Endothelial cell of umbilical vein (primary cell): ENCODE measurements at regions of chr6 and their contacts with region 1.

Region 1: DNA sequence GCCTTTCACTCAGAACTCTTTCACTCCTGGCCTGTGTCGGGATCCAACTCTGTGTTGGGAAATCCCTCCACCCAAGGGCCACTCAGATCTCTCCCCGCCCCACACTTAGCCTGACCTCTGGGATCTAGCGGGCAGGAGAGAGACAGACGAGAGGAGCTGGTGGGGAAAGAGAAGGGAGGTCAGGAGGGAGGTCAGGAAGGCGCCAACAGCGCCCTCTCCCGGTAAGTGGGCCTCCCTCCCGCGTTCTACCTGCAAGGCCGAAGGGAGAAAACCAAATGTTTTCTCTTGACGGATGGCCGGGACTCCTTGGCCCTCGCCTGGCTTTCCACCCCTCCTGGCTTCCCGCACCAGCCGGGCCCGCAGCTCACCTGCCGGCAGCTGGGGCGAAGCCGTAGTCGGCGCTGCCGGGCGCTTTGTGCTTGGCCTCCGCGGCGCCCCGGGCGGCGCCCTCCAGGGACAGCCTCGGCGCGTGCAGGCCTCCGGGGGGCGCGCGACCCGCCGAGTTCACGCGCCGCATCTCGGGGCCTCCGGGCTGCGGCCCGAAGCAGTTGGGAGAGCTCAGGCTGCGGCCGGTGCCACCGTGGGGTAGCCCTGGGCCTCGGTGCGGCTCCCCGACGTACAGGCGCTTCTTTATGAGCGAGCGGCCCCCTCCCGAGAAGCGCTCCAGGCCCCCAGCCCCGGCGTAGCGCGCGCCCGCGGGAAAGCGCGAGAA is 38.2 kb downstream of the C6orf132 start:
- DNase-seq: peak; percentile 64
- H3K4me3 ChIP-seq: peak overlapping the region in 2 of 3 experiments; percentile 11 to 25
- H3K27ac ChIP-seq: no peak overlapping the region
- H3K4me1 ChIP-seq: peaks cover 5% of the 10 kb centered on the region
- H3K27me3 ChIP-seq: no peaks in the 10 kb centered on the region
- CTCF ChIP-seq: peak; percentile 86 to 87
- POLR2A ChIP-seq: no peak

Region 2: GRCh38 chr6:41451039-41451438 is 653.2 kb before region 1 on chr6:
- CTCF ChIA-PET with region 1: no interaction called
- POLR2A ChIA-PET with region 1: no interaction called
- dilution Hi-C with region 1: no loop called
- intact Hi-C with region 1: no loop called
- DNase-seq: no peak
- H3K4me3 ChIP-seq: no peak overlapping the region
- H3K27ac ChIP-seq: no peak overlapping the region
- H3K4me1 ChIP-seq: no peaks in the 10 kb centered on the region
- H3K27me3 ChIP-seq: peaks cover 2 to 6% of the 10 kb centered on the region in 2 experiments
- CTCF ChIP-seq: no peak
- POLR2A ChIP-seq: no peak

Region 3: DNA sequence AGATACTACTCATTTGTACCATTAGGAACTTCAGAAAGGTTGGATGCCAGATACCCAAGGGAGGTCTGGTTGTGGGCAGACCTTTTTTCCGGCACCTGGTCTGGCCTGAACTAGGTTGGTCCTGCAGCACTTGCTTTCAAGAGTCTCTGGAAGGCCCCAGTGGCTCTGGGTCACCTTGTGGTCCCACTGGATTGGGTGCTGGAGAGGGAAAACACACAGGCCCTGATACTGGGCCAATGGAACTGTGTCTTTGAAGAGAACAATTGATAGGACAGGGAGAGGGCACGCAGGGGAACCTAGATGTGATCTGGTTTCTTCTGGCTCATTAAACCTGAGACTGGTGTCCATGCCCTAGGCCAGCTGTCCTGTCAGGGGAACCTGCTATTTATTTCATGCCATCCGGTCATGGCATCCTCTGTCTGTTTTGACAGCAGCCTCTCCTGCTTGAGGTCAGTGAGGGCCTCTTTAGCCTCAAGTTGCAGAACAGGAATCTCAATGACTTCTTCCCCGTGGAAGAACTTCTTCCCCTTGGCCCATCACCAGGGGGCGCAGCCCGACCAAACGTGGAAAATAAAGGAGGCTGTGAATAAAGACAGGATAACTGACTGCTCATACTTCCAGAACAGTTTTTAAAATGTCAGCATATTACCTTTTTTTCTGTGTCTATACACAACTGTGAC is 29.0 kb before region 1 on chr6:
- CTCF ChIA-PET with region 1: interaction called, 12 read pairs
- POLR2A ChIA-PET with region 1: no interaction called
- dilution Hi-C with region 1: no loop called
- intact Hi-C with region 1: loop called (anchors 1 kb)
- DNase-seq: peak; percentile 72
- H3K4me3 ChIP-seq: no peak overlapping the region
- H3K27ac ChIP-seq: no peak overlapping the region
- H3K4me1 ChIP-seq: no peaks in the 10 kb centered on the region
- H3K27me3 ChIP-seq: no peaks in the 10 kb centered on the region
- CTCF ChIP-seq: peak; percentile 77 to 84
- POLR2A ChIP-seq: peak; percentile 10

Region 4: DNA sequence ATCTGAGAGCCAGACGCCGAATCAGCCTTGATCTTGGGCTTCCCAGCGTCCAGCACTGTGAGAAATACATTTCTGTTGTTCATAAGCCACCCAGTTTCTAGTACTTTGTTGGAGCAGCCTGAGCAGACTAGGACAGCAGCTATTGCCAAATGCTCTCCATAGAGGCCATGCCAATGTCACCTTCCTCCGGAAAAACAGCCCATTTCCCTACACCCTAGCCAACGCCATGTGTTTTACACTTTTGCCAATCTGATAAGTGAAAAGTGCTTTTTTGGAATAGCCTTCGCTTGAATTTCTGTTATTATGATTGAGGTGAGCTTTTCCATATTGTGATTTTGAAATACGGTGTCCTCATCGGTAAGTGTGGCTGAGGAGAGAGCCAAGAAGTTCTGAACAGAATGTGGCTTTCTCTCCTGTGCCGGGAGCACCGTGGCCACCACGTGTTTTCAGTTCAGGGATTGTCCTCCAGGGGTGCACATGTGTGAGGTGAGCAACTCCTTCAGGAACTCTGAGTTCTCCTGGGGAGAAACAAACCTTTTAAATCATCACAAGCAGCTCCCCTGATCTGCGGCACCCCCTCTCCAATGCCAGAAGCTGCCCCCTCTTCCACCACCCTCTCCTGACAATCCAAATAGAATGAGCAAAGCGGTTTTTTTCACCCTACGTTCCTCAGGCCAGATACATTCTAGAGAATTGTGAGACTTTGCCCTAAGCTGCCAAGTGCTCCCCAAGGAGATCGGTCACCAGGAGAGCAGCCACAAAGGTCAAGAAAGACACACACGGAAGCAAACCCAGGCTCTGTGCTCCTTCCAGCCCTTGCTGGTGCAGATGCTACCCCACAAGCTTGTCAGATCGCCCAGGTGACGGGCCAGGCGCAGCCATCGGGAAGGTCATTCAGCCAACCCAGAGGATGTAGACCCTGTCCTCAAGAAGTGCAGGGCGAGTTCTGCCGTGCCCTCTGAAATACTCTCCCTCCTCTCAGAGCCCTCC is 17.9 kb before region 1 on chr6:
- CTCF ChIA-PET with region 1: interaction called, 35 read pairs
- POLR2A ChIA-PET with region 1: no interaction called
- dilution Hi-C with region 1: no loop called
- intact Hi-C with region 1: no loop called
- DNase-seq: peak; percentile 73
- H3K4me3 ChIP-seq: no peak overlapping the region
- H3K27ac ChIP-seq: no peak overlapping the region
- H3K4me1 ChIP-seq: peaks cover 5% of the 10 kb centered on the region
- H3K27me3 ChIP-seq: no peaks in the 10 kb centered on the region
- CTCF ChIP-seq: peak; percentile 31 to 51
- POLR2A ChIP-seq: no peak

Region 5: DNA sequence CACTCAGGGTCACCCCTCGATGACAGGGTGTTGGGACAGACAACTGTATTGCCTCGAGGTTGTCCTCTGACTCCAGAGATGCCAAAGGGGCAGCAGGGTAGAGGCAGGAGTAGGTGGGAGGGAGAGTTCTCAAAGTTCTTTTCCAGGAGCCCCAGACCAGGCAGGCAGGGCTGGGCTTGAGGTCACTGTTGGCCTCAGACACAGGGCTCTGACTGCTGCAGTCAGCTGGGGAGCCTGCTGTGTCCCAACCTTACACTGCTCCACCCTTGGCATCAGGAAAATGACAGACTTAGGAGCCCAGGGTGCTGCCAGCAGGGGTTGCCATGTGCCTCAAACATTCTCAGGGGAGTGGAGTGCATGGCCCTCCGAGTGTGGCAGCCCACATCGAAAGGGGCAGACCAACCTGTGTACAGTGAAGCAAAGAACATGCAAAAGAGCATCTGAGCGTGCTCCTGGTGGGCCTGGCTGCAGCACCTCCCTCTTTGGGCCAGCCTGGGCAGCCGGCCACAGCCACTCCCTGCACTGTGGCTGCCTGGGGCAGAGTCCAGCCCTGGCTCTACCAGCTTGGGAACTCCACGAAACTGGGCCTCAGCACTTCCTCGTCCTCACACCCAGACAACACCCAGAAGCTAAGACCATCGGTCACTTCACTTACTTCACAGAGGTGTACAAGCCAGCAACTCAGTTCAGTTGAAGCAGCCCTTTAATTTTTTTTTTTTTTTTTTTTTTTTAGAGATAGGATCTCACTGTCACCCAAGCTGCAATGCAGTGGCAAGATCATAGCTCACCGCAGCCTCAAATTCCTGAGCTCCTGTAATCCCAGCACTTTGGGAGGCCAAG is 14.1 kb after region 1 on chr6:
- CTCF ChIA-PET with region 1: interaction called, 13 read pairs
- POLR2A ChIA-PET with region 1: no interaction called
- dilution Hi-C with region 1: no loop called
- intact Hi-C with region 1: no loop called
- DNase-seq: no peak
- H3K4me3 ChIP-seq: no peak overlapping the region
- H3K27ac ChIP-seq: no peak overlapping the region
- H3K4me1 ChIP-seq: no peaks in the 10 kb centered on the region
- H3K27me3 ChIP-seq: peaks cover 0 to 2% of the 10 kb centered on the region in 2 experiments
- CTCF ChIP-seq: no peak
- POLR2A ChIP-seq: no peak

Region 6: DNA sequence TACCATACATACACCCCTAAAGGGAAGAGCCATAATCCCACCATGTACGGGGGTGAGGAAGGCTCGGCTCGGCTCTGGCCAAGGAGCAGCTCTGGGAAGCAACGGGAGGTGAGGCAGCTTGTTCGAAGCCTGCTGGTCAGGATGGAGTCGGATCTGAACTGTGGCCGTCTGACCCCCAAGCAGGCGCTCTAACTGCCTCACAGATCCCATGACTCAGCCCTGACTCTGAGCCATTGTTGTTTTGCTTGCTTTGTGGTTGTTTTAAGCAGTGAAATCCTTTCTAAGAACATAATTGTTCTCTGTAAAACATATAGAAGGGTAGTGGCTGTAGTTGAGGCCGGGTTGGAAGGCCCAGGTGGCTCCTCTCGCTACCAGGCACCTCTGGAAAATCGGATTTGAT is 27.3 kb after region 1 on chr6:
- CTCF ChIA-PET with region 1: interaction called, 31 read pairs
- POLR2A ChIA-PET with region 1: interaction called, 5 read pairs
- dilution Hi-C with region 1: no loop called
- intact Hi-C with region 1: no loop called
- DNase-seq: peak; percentile 82
- H3K4me3 ChIP-seq: no peak overlapping the region
- H3K27ac ChIP-seq: peak overlapping the region; percentile 47
- H3K4me1 ChIP-seq: peaks cover 15% of the 10 kb centered on the region
- H3K27me3 ChIP-seq: no peaks in the 10 kb centered on the region
- CTCF ChIP-seq: no peak
- POLR2A ChIP-seq: no peak

Region 7: GRCh38 chr6:42136508-42137193 is 32.4 kb after region 1 on chr6:
- CTCF ChIA-PET with region 1: interaction called, 31 read pairs
- POLR2A ChIA-PET with region 1: interaction called, 5 read pairs
- dilution Hi-C with region 1: no loop called
- intact Hi-C with region 1: no loop called
- DNase-seq: no peak
- H3K4me3 ChIP-seq: no peak overlapping the region
- H3K27ac ChIP-seq: peak overlapping the region; percentile 23
- H3K4me1 ChIP-seq: peaks cover 18% of the 10 kb centered on the region
- H3K27me3 ChIP-seq: peaks cover 0 to 2% of the 10 kb centered on the region in 2 experiments
- CTCF ChIP-seq: peak in 1 of 2 donors; percentile 25
- POLR2A ChIP-seq: no peak

Region 8: DNA sequence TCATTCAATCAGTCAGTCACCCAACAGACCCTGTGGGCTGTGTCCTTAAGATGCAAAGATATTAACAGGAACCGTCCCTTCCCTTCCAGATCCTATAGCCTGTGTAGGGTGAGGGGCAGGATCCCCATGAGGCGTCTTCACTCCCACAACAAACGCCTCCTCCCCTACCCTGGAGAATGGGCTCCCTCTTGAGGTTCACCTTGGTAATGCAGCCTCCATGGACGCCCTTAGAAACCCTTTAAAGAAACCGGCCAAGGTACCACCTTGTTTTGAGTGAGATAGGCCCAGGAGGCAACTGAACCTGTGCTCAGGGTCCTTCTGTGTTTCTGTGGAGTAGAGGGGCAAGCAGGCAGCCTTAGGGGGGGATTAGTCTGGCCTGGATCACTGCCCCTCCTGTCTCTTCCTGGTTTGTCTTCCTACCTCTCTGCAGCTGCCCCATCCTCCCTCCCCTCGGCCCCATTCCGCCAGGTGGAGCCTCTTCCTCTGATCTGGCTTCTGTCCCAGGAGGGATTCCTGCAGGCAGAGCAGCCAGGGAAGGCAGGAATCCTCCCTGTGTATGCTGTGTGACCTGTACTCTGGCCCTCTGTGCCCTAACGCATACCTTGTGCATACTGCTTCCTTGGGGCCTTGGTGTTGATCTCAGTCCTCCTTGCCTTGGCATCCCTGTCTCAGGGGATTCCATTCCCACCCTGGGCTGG is 62.3 kb after region 1 on chr6:
- CTCF ChIA-PET with region 1: interaction called, 28 read pairs
- POLR2A ChIA-PET with region 1: no interaction called
- dilution Hi-C with region 1: no loop called
- intact Hi-C with region 1: no loop called
- DNase-seq: peak; percentile 72
- H3K4me3 ChIP-seq: no peak overlapping the region
- H3K27ac ChIP-seq: no peak overlapping the region
- H3K4me1 ChIP-seq: no peaks in the 10 kb centered on the region
- H3K27me3 ChIP-seq: peaks cover 0 to 4% of the 10 kb centered on the region in 2 experiments
- CTCF ChIP-seq: peak; percentile 82 to 91
- POLR2A ChIP-seq: no peak